ENCODE measurements at regions of chr1 and their contacts with region 1.

Region 1: GRCh38 chr1:94061513-94062443 is 59.2 kb downstream of the ABCA4 start:
- DNase-seq: peak in 41 of 42 donors; percentile 23 to 86 (median 67)

Region 2: GRCh38 chr1:94025383-94026340 is 36.1 kb before region 1 on chr1:
- intact Hi-C with region 1: no loop called
- DNase-seq: peak in 20 of 42 donors; percentile 17 to 72 (median 42)

Region 3: GRCh38 chr1:94247138-94248094 is 185.6 kb after region 1 on chr1:
- intact Hi-C with region 1: loop called (anchors 10 kb)
- DNase-seq: peak in 15 of 42 donors; percentile 4 to 59 (median 24)

Region 4: GRCh38 chr1:94335950-94336349 is 274.2 kb after region 1 on chr1:
- intact Hi-C with region 1: loop called (anchors 5 kb)
- DNase-seq: peak; percentile 15 to 92 (median 74)

Region 5: DNA sequence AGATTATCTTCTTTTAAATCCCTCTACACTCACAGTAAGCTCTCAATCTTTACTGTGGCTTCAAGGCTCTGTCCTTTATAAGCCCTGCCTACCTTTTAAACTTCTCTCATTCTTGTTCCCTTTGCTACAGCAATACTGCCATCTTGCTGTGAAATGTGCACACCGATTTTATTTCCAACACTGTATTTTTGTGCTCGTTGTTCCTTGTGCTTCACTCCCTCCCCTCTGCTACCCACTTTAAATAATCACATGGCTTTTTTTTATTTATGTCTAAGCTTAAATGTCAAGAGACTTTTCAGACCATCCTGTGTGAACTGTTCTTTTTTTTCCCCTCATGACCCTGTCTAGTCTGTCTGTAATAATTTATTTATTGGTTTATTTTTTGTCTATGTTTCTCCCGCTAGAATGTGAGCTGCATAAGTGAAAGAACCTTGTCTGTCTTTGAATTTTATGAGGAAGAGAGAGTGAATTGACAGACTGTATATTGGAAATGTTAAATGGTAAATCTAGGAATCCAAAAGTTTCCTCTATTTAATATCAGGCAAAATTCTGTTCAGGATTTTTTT is 402.1 kb after region 1 on chr1:
- intact Hi-C with region 1: loop called (anchors 5 kb)
- DNase-seq: peak in 12 of 42 donors; percentile 8 to 56 (median 18)